Activated CD8-positive, alpha-beta T cell treated with anti-CD3 and anti-CD28 coated beads for 36 hours (primary cell): ENCODE measurements at regions of chr11 and their contacts with region 1.

Region 1: GRCh38 chr11:58654079-58654907 is 31.8 kb downstream of the CNTF start:
- DNase-seq: peak; percentile 90
- ATAC-seq: peak; percentile 96
- H3K4me3 Mint-ChIP-seq: peak overlapping the region; percentile 5
- H3K27ac Mint-ChIP-seq: peak overlapping the region; percentile 17
- H3K4me1 Mint-ChIP-seq: peaks cover 19% of the 10 kb centered on the region
- H3K27me3 Mint-ChIP-seq: no peaks in the 10 kb centered on the region
- CTCF ChIP-seq: peak; percentile 92

Region 2: GRCh38 chr11:58629857-58630256 is 24.4 kb before region 1 on chr11:
- CTCF ChIA-PET with region 1: interaction called, 16 read pairs
- POLR2A ChIA-PET with region 1: interaction called, 3 read pairs
- intact Hi-C with region 1: no loop called
- DNase-seq: peak; percentile 45
- ATAC-seq: peak; percentile 70
- H3K4me3 Mint-ChIP-seq: no peak overlapping the region
- H3K27ac Mint-ChIP-seq: peak overlapping the region; percentile 18
- H3K4me1 Mint-ChIP-seq: peaks cover 9% of the 10 kb centered on the region
- H3K27me3 Mint-ChIP-seq: no peaks in the 10 kb centered on the region
- CTCF ChIP-seq: peak; percentile 43

Region 3: DNA sequence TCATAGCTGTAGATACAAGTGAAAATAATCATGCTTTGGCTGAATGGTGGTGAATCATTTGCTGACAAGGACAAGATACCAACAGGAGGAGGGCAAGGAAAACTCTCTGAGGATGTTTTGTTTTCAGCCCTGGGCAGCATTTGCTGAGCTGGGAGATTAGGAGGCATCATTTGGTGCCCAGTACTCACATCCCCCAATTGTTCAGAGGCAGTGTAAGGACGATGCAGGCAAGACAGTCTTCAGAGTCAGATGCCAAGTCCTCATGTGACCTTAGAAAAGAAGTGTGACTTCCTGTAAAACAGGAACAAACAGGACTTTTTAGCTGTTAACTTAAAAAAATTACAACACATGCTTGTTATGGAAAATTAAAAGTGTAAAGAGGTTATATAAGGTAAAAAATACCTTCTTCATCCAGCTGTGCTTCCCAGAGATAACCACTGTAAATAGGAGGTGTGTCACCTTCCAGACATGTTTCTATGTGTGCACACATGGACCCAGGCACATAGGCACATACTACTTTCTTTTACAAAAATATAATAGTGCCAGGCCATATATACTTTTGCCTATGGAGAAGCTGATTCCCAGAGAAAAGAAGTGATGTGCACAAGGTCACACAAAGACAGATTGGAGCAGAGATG is 13.8 kb before region 1 on chr11:
- CTCF ChIA-PET with region 1: interaction called, 10 read pairs
- POLR2A ChIA-PET with region 1: interaction called, 5 read pairs
- intact Hi-C with region 1: no loop called
- DNase-seq: no peak
- ATAC-seq: peak; percentile 77
- H3K4me3 Mint-ChIP-seq: no peak overlapping the region
- H3K27ac Mint-ChIP-seq: peak overlapping the region; percentile 50
- H3K4me1 Mint-ChIP-seq: peaks cover 25% of the 10 kb centered on the region
- H3K27me3 Mint-ChIP-seq: no peaks in the 10 kb centered on the region
- CTCF ChIP-seq: no peak

Region 4: DNA sequence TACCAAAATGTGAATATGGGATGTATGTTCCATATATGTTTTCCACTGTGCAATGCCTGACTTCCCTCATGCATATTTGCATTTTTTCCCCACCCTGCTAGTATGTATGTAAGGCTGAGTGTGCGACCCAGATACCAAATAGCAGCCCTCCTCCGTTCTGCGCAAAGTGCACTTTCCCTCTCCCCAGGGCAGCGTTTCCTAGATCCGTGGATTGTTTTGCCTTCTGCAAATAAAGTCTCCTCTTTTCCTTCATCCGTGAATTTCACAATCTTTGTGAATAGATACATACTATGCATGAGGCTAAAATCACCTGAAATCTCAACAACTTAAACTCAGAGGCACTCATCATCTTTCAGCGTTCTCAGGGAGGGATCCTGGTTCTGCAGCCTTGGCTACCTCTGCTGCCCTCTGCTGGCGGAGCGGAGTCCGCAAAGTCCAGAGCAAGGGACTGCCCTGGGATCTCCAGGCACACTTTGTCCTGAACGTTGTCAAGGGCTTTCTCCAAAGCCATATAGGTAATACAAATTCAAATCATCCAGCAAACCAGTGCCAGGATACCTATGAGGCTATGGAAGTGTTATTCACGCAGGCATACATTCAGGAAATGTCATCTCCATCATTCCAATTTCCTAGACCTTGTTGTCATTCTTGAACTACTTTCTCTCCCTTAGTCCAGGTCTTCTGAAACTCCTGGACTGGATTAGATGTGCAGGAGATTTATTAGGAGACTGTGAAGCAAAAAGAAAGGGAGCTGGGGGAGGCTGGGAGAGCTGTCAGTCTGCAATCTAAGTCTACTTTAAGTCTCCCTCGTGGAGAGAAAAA is 21.3 kb after region 1 on chr11:
- CTCF ChIA-PET with region 1: interaction called, 35 read pairs
- POLR2A ChIA-PET with region 1: interaction called, 3 read pairs
- intact Hi-C with region 1: no loop called
- DNase-seq: peak; percentile 84
- ATAC-seq: peak; percentile 86
- H3K4me3 Mint-ChIP-seq: no peak overlapping the region
- H3K27ac Mint-ChIP-seq: no peak overlapping the region
- H3K4me1 Mint-ChIP-seq: no peaks in the 10 kb centered on the region
- H3K27me3 Mint-ChIP-seq: peaks cover 2% of the 10 kb centered on the region
- CTCF ChIP-seq: peak; percentile 95

Region 5: GRCh38 chr11:58719406-58720117 is 65.3 kb after region 1 on chr11:
- CTCF ChIA-PET with region 1: no interaction called
- POLR2A ChIA-PET with region 1: no interaction called
- intact Hi-C with region 1: loop called (anchors 10 kb)
- DNase-seq: no peak
- ATAC-seq: no peak
- H3K4me3 Mint-ChIP-seq: no peak overlapping the region
- H3K27ac Mint-ChIP-seq: no peak overlapping the region
- H3K4me1 Mint-ChIP-seq: no peaks in the 10 kb centered on the region
- H3K27me3 Mint-ChIP-seq: no peaks in the 10 kb centered on the region
- CTCF ChIP-seq: no peak

Region 6: GRCh38 chr11:58788355-58789023 is 134.2 kb after region 1 on chr11:
- CTCF ChIA-PET with region 1: interaction called, 45 read pairs
- POLR2A ChIA-PET with region 1: no interaction called
- intact Hi-C with region 1: loop called (anchors 1 kb)
- DNase-seq: peak; percentile 31
- ATAC-seq: peak; percentile 98
- H3K4me3 Mint-ChIP-seq: no peak overlapping the region
- H3K27ac Mint-ChIP-seq: no peak overlapping the region
- H3K4me1 Mint-ChIP-seq: peaks cover 2% of the 10 kb centered on the region
- H3K27me3 Mint-ChIP-seq: peaks cover 5% of the 10 kb centered on the region
- CTCF ChIP-seq: peak; percentile 86

Region 7: GRCh38 chr11:58805065-58805464 is 150.8 kb after region 1 on chr11:
- CTCF ChIA-PET with region 1: no interaction called
- POLR2A ChIA-PET with region 1: no interaction called
- intact Hi-C with region 1: no loop called
- DNase-seq: no peak
- ATAC-seq: no peak
- H3K4me3 Mint-ChIP-seq: no peak overlapping the region
- H3K27ac Mint-ChIP-seq: no peak overlapping the region
- H3K4me1 Mint-ChIP-seq: no peaks in the 10 kb centered on the region
- H3K27me3 Mint-ChIP-seq: peaks cover 5% of the 10 kb centered on the region
- CTCF ChIP-seq: no peak

Region 8: GRCh38 chr11:59062602-59063529 is 408.6 kb after region 1 on chr11:
- CTCF ChIA-PET with region 1: no interaction called
- POLR2A ChIA-PET with region 1: no interaction called
- intact Hi-C with region 1: loop called (anchors 10 kb)
- DNase-seq: no peak
- ATAC-seq: no peak
- H3K4me3 Mint-ChIP-seq: no peak overlapping the region
- H3K27ac Mint-ChIP-seq: no peak overlapping the region
- H3K4me1 Mint-ChIP-seq: peaks cover 3% of the 10 kb centered on the region
- H3K27me3 Mint-ChIP-seq: peaks cover 36% of the 10 kb centered on the region
- CTCF ChIP-seq: no peak